ENCODE measurements at regions of chr1 and their contacts with region 1.

Region 1: DNA sequence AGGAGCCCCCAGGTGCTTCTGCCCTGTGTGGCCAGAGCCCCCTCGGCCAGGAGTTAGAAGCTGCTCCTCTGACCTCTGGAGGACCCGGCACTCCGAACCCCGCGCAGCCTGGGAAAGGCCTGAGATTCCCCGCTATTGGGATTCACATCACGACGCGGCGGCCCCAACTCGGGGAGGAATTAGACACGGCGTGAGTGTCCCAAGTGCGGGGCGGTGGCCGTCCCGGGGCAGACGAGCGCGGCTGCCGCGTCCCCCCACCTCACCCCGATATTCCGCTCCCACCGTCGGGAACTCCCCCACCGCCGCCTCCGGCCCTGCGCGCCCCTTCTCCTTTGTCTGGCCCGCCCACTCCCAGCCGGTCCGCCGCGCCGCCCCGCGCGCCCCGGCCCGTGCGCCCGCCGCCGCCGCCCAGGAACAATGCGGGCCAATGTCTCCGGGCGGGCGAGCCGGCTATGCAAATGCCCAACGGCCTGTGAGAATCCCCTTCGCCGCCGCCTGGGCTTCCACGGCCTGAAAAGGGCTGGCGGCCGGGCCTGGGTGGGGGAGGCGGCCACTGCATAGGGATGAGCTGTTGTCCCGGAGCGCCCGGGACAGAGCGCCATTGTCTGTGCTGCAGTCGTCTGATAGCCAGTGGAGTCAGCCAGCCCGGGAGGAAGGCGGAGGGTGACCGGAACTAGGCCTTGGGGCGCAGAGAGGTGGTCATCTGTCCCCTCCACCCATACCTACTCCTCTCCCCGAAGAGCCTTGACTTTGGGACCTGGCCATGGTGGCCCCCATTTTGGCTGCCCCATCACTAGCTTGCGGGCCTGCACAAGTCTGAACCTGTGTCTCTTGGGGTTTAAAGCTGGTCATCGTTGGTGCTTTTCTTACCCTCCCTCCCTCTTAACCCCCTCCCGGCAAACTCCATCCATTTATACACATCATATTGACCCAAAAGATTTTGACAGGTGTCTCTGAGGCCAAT is 19.4 kb downstream of the RHBG start:
- DNase-seq: no peak
- ATAC-seq: no peak
- H3K4me3 ChIP-seq: no peak overlapping the region
- H3K27ac ChIP-seq: no peak overlapping the region
- H3K4me1 ChIP-seq: peaks cover 7% of the 10 kb centered on the region; the same call in 1 of the 3 replicates
- CTCF ChIP-seq: no peak
- EP300 ChIP-seq: no peak
- POLR2A ChIP-seq: no peak
- RAD21 ChIP-seq: no peak

Region 2: DNA sequence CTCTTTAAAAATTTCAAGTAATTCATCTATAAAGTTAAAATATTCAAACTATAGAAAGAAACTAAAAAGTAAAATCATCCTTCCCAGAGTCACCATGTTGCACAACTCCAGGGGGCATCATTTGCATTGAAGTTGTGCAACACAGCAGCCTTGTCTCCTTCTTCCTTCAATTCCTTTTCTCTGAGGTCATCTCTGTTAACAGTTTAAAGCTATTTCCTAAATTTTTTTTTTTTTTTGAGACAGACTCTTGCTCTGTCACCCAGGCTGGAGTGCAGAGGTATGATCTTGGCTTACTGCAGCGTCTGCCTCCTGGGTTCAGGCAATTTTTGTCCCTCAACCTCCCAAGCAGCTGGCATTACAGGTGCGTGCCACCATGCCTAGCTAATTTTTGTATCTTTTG is 12.3 kb before region 1 on chr1:
- CTCF ChIA-PET with region 1: interaction called, 487 read pairs
- POLR2A ChIA-PET with region 1: no interaction called
- DNase-seq: no peak
- ATAC-seq: no peak
- H3K4me3 ChIP-seq: no peak overlapping the region
- H3K27ac ChIP-seq: peak overlapping the region in 1 of 2 experiments; percentile 12; a peak in 1 of 6 replicates
- H3K4me1 ChIP-seq: peaks cover 30% of the 10 kb centered on the region
- CTCF ChIP-seq: no peak
- EP300 ChIP-seq: no peak
- POLR2A ChIP-seq: no peak
- RAD21 ChIP-seq: no peak

Region 3: GRCh38 chr1:156813750-156814570 is 425.5 kb after region 1 on chr1:
- CTCF ChIA-PET with region 1: no interaction called
- POLR2A ChIA-PET with region 1: no interaction called
- DNase-seq: peak; percentile 73
- ATAC-seq: peak; percentile 83 to 91
- H3K4me3 ChIP-seq: peak overlapping the region; percentile 39
- H3K27ac ChIP-seq: peak overlapping the region; percentile 76 to 86
- H3K4me1 ChIP-seq: peaks cover 24% of the 10 kb centered on the region
- CTCF ChIP-seq: peak; percentile 59
- EP300 ChIP-seq: no peak
- POLR2A ChIP-seq: peak; percentile 60
- RAD21 ChIP-seq: peak; percentile 13 to 34; a peak in 2 of 5 replicates